ENCODE measurements at regions of chr3 and their contacts with region 1.

Region 1: DNA sequence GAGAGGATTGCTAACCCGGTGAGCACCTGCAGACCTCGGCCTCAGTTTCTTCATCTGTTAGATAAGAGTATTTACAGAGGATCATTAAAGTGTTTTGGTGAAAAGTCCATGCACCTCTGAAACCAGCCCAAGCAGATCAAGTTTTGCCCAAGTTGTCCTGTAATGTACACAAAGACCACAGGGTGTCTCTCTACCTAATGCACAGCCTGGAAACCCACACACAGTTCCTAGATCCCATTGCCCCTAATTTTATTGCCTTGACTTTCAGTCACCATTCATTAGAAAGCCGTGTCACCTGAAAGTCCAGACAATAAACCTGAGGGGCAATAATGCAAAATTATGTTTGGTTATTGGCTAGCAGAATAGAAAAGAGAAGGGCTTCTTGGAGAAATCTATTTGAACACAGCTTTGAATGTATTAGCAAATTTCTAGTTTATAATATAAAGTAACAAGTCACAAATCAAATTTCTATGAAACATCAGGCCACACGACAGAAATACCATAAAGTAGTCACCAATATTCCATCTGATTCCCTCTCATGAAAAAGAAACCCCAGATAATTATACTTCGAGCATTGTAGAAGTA is 161.3 kb upstream of the SLC2A2 start:
- DNase-seq: no peak
- ATAC-seq: peak; percentile 57
- H3K4me3 ChIP-seq: no peak overlapping the region
- H3K27ac ChIP-seq: no peak overlapping the region
- H3K4me1 ChIP-seq: peaks cover 24 to 30% of the 10 kb centered on the region in 2 experiments
- H3K27me3 ChIP-seq: no peaks in the 10 kb centered on the region
- CTCF ChIP-seq: peak; percentile 59 to 72 (median 71); a peak in 5 of 6 replicates
- POLR2A ChIP-seq: no peak
- RAD21 ChIP-seq: peak; percentile 87

Region 2: GRCh38 chr3:171049861-171050444 is 137.8 kb before region 1 on chr3:
- CTCF ChIA-PET with region 1: no interaction called
- POLR2A ChIA-PET with region 1: no interaction called
- RAD21 ChIA-PET with region 1: interaction called in 1 of 2 experiments, 4 read pairs
- intact Hi-C with region 1: loop called (anchors 5 kb)
- DNase-seq: peak; percentile 45
- ATAC-seq: peak; percentile 96
- H3K4me3 ChIP-seq: no peak overlapping the region
- H3K27ac ChIP-seq: no peak overlapping the region
- H3K4me1 ChIP-seq: peaks cover under 1 to 4% of the 10 kb centered on the region in 2 experiments
- H3K27me3 ChIP-seq: no peaks in the 10 kb centered on the region
- CTCF ChIP-seq: peak; percentile 62 to 77 (median 68); a peak in 5 of 6 replicates
- POLR2A ChIP-seq: no peak
- RAD21 ChIP-seq: peak; percentile 90

Region 3: DNA sequence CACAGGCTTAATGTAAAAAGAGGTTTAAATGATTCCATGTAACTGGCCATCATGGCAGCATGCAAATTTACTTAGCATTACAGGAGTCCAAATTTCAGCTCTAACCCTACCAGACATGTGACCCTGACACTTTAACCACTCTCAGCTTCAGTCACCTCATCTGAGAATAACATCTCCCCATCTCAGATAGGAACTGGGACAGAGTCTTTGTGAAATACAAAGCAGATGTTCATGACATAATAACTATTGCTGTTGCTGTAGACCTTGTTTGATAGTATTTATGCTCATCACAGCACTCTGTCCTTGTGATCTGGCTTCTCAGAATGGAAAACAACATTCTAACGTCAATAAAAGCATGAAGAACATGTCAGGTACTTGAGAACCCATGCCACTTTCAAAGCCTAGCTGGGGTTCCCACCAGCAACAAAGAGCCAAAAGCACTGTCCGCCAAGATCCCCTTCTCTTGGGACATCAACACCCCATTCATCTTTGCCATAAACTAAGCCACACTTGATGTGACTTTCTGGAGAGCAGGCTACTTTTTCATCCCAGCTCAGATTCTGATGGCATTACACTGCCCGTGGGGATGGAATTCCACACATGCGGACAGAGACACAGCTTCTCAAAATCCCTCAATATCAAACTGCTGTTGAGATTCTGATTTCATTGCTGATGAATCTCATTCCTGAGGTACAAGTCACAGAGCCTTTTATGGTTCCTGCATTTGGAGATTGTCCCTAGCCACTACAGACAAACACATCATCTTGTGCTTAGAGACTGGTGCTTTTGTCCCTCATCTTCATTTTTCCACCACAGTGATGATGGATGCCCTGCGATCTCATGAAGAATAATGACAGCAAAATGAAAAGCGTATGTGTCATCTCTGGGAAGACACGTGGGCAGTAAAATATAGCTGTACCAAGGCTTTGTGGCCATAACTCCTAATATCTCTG is 69.7 kb after region 1 on chr3:
- CTCF ChIA-PET with region 1: no interaction called
- POLR2A ChIA-PET with region 1: no interaction called
- RAD21 ChIA-PET with region 1: no interaction called
- intact Hi-C with region 1: loop called (anchors 5 kb)
- DNase-seq: no peak
- ATAC-seq: peak; percentile 7
- H3K4me3 ChIP-seq: 0 out of 4 replicates have a peak overlapping the region, but pooled peaks of 1 of the 2 experiments have one; percentile 4
- H3K27ac ChIP-seq: peak overlapping the region; percentile 76
- H3K4me1 ChIP-seq: peaks cover 78 to 81% of the 10 kb centered on the region in 2 experiments
- H3K27me3 ChIP-seq: no peaks in the 10 kb centered on the region
- CTCF ChIP-seq: no peak
- POLR2A ChIP-seq: no peak
- RAD21 ChIP-seq: no peak

Region 4: GRCh38 chr3:171459942-171460724 is 272.3 kb after region 1 on chr3 and contains the start of gene TNIK:
- CTCF ChIA-PET with region 1: no interaction called
- POLR2A ChIA-PET with region 1: no interaction called
- RAD21 ChIA-PET with region 1: no interaction called
- intact Hi-C with region 1: loop called (anchors 5 kb)
- DNase-seq: peak; percentile 81
- ATAC-seq: peak; percentile 90
- H3K4me3 ChIP-seq: peak within 1 kb of the TSS; percentile 71 to 82
- H3K27ac ChIP-seq: peak within 1 kb of the TSS; percentile 71
- H3K4me1 ChIP-seq: peaks cover 12 to 30% of the 10 kb centered on the region in 2 experiments; a peak in 3 of 4 replicates
- H3K27me3 ChIP-seq: no peaks in the 10 kb centered on the region
- CTCF ChIP-seq: peak in 2 of 3 experiments; percentile 16 to 54; a peak in 2 of 6 replicates
- POLR2A ChIP-seq: peak; percentile 25
- RAD21 ChIP-seq: no peak
- total RNA-seq, gene TNIK: 24.1 TPM

Region 5: DNA sequence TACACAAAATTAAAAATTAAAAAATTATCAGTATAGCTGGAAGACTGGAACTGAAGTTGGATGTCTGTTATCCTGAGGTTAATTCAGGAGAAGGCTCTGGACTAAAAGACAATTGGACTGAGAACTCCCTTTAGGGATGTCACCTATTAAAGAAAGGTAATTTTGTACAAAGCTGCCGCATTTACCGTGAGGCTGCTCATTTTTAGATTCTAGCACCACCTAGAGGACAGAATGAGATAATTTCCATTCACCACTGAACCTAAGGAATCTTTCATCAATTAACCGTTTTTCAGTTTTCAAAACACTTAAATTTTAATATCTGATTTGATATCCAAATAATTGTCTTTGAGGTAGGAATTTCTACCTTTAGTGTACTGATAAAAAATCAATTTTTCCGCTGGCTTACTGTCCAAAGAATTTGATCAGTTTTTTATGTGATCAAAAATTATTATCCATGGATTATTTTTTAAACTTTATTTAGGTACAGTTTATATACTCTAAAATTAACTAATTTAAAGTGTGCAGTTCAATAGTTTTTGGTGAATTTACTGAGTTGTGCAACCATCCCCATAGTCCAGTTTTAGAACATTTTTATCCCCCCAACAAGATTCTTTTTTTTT is 379.1 kb after region 1 on chr3:
- CTCF ChIA-PET with region 1: no interaction called
- POLR2A ChIA-PET with region 1: no interaction called
- RAD21 ChIA-PET with region 1: no interaction called
- intact Hi-C with region 1: loop called (anchors 1 kb)
- DNase-seq: peak; percentile 28
- ATAC-seq: peak; percentile 69
- H3K4me3 ChIP-seq: no peak overlapping the region
- H3K27ac ChIP-seq: no peak overlapping the region
- H3K4me1 ChIP-seq: no peaks in the 10 kb centered on the region
- H3K27me3 ChIP-seq: no peaks in the 10 kb centered on the region
- CTCF ChIP-seq: peak; percentile 53 to 82 (median 72)
- POLR2A ChIP-seq: no peak
- RAD21 ChIP-seq: peak; percentile 95